Mammary epithelial cell (primary cell): ENCODE measurements at regions of chr3 and their contacts with region 1.

Region 1: DNA sequence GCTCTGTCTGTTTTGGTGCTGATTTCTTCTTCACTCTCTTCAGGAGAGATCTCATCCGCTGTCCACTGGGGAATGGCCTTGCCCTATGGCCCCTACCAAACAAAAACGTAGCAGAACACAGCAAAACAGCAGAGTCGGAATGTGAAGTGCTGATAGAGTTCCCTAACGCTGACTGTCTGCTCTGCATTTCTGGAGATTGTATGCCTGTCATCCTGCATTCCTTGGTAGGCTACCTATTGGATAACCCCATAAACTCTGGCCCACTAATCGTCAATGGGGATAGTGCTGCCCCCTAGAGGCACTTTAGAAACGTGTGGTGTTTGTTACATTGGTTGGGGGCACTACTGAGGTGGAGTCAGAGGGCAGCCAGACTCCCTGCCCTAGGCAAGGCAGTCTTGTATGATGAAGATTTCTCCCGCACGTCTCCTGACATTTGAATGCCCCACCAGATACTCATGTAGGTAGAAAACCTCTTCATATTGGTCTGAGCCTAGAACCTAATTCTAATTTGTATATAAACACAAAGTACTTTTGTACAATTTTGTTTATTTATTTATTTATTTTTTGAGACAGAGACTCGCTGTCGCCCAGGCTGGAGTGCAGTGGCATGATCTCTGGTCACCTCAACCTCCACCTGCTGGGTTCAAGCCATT is 15.6 kb upstream of the MAGEF1 start:
- DNase-seq: peak; percentile 82
- H3K4me3 ChIP-seq: no peak overlapping the region
- H3K27ac ChIP-seq: peak overlapping the region; percentile 21
- H3K4me1 ChIP-seq: peaks cover 18% of the 10 kb centered on the region
- H3K27me3 ChIP-seq: no peaks in the 10 kb centered on the region
- CTCF ChIP-seq: peak; percentile 79 to 85

Region 2: DNA sequence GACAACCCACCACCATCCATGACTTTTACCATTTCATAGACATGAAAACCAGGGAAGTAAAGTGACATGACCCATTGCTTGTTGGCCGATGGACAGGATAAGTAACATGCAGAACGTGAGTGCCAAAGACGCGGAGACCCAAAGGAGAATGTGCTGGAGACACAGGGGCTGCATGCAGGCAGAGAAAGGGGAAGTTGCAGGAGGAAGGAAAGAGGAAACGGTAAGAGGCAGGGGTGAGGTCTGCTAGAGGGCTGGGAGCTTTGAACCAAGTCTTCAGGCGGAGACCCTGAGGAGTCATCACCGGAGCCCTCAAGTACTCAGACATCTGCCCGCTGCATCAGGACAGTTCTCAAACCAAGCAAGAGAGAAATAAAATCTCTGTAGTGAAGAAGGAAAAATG is 50.6 kb before region 1 on chr3:
- CTCF ChIA-PET with region 1: no interaction called
- dilution Hi-C with region 1: no loop called
- in situ Hi-C with region 1: no loop called
- intact Hi-C with region 1: loop called (anchors 2 kb)
- DNase-seq: no peak
- H3K4me3 ChIP-seq: no peak overlapping the region
- H3K27ac ChIP-seq: no peak overlapping the region
- H3K4me1 ChIP-seq: no peaks in the 10 kb centered on the region
- H3K27me3 ChIP-seq: no peaks in the 10 kb centered on the region
- CTCF ChIP-seq: no peak

Region 3: GRCh38 chr3:184711493-184712247 is 15.8 kb before region 1 on chr3 and contains the start of gene MAGEF1:
- CTCF ChIA-PET with region 1: no interaction called
- dilution Hi-C with region 1: no loop called
- in situ Hi-C with region 1: no loop called
- intact Hi-C with region 1: loop called (anchors 1 kb)
- DNase-seq: peak; percentile 77
- H3K4me3 ChIP-seq: peak within 1 kb of the TSS; percentile 74 to 90 (median 83)
- H3K27ac ChIP-seq: peak within 1 kb of the TSS; percentile 80
- H3K4me1 ChIP-seq: peaks cover 16% of the 10 kb centered on the region
- H3K27me3 ChIP-seq: no peaks in the 10 kb centered on the region
- CTCF ChIP-seq: no peak
- total RNA-seq, gene MAGEF1: 19.0 to 27.8 TPM

Region 4: GRCh38 chr3:184748219-184749135 is 21.0 kb after region 1 on chr3:
- CTCF ChIA-PET with region 1: interaction called, 9 read pairs
- dilution Hi-C with region 1: no loop called
- in situ Hi-C with region 1: no loop called
- intact Hi-C with region 1: loop called (anchors 2 kb)
- DNase-seq: peak; percentile 83
- H3K4me3 ChIP-seq: no peak overlapping the region
- H3K27ac ChIP-seq: peak overlapping the region; percentile 54
- H3K4me1 ChIP-seq: peaks cover 8% of the 10 kb centered on the region
- H3K27me3 ChIP-seq: no peaks in the 10 kb centered on the region
- CTCF ChIP-seq: peak; percentile 74 to 93

Region 5: GRCh38 chr3:184765730-184766074 is 38.2 kb after region 1 on chr3:
- CTCF ChIA-PET with region 1: no interaction called
- dilution Hi-C with region 1: loop called (anchors 5 kb)
- in situ Hi-C with region 1: loop called in 1 of 2 experiments (anchors 5 kb)
- intact Hi-C with region 1: loop called (anchors 5 kb)
- DNase-seq: peak; percentile 95
- H3K4me3 ChIP-seq: no peak overlapping the region
- H3K27ac ChIP-seq: peak overlapping the region; percentile 99
- H3K4me1 ChIP-seq: peaks cover 26% of the 10 kb centered on the region
- H3K27me3 ChIP-seq: no peaks in the 10 kb centered on the region
- CTCF ChIP-seq: no peak

Region 6: DNA sequence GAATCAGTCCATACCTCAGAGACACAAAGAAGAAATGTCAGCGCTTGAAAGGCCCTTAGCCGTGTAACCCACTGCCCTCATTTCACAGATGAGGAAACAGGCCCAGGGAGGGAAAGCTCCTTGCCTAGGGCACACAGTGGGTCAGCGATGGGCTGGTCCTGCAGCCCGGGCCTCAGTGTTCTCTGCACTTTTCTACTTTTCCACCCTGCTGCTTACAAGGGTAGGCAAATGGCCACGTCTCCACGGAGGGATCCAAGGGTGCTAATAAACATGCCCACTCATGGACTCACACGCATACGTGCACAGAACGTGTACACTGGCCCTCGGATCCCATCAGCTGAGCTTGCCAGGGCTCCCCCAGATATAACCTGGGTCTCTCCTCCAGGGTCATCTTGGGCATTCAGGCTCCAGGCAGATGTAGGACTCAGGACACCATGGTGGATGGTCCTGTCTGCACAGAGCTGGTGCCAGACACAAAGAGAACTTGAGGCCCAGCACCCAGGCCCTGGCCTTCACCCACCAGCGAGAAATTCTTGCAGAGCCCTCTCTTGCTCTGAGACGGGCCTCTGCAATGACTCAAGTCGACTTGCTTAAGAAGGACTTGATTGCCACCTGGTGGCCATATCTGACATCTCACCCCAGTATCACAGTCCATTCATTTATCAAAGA is 50.0 kb after region 1 on chr3:
- CTCF ChIA-PET with region 1: no interaction called
- dilution Hi-C with region 1: no loop called
- in situ Hi-C with region 1: no loop called
- intact Hi-C with region 1: loop called (anchors 1 kb)
- DNase-seq: peak; percentile 80
- H3K4me3 ChIP-seq: no peak overlapping the region
- H3K27ac ChIP-seq: no peak overlapping the region
- H3K4me1 ChIP-seq: peaks cover 18% of the 10 kb centered on the region
- H3K27me3 ChIP-seq: no peaks in the 10 kb centered on the region
- CTCF ChIP-seq: peak; percentile 74